H1 (cell line): ENCODE measurements at regions of chr1 and their contacts with region 1.

Region 1: GRCh38 chr1:145858894-145859490 is at the start of gene PIAS3:
- DNase-seq: peak; percentile 72 to 95
- H3K4me3 ChIP-seq: peak within 1 kb of the TSS; percentile 63 to 95 (median 89)
- H3K27ac ChIP-seq: peak within 1 kb of the TSS; percentile 78
- H3K4me1 ChIP-seq: peaks cover 0 to 5% (median 3%) of the 10 kb centered on the region in 4 experiments; a peak in 4 of 7 replicates
- H3K27me3 ChIP-seq: no peaks in the 10 kb centered on the region
- CTCF ChIP-seq: no peak
- EP300 ChIP-seq: peak in 1 of 2 experiments; percentile 61; a peak in 1 of 3 replicates
- POLR2A ChIP-seq: no peak; a peak in 1 of 3 replicates
- RAD21 ChIP-seq: no peak
- total RNA-seq, gene PIAS3: 36.7 and 40.7 TPM in 2 replicates

Region 2: GRCh38 chr1:145751491-145752037 is 107.4 kb before region 1 on chr1:
- CTCF ChIA-PET with region 1: no interaction called
- POLR2A ChIA-PET with region 1: no interaction called
- DNase-seq: no peak
- H3K4me3 ChIP-seq: no peak overlapping the region
- H3K27ac ChIP-seq: no peak overlapping the region
- H3K4me1 ChIP-seq: no peaks in the 10 kb centered on the region
- H3K27me3 ChIP-seq: no peaks in the 10 kb centered on the region
- CTCF ChIP-seq: no peak
- EP300 ChIP-seq: no peak
- POLR2A ChIP-seq: no peak
- RAD21 ChIP-seq: no peak

Region 3: DNA sequence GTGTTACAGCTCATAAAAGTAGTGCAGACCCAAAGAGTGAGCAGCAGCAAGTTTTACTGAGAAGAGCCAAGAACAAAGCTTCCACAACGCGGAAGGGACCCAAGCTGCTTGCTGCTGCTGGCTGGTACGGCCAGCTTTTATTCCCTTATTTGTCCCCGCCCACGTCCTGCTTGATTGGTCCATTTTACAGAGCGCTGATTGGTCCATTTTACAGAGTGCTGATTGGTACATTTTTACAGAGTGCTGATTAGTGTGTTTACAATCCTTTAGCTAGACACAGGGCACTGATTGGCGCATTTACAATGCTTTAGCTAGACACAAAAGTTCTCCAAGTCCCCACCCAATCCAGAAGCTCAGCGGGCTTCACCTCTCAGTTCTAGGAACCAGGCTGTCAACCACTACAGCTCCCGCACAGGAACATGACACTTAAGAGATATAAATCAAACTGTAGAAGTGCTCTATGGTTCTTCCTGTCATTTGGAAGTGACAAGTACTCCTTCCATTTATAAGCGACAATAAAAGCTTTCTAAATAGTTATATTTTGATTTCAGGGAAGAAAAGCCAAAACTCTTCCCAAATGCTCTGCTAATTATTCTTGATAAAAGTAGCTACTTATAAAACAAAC is 63.6 kb before region 1 on chr1:
- CTCF ChIA-PET with region 1: no interaction called
- POLR2A ChIA-PET with region 1: no interaction called
- DNase-seq: no peak
- H3K4me3 ChIP-seq: no peak overlapping the region
- H3K27ac ChIP-seq: no peak overlapping the region
- H3K4me1 ChIP-seq: peaks cover 0 to 3% (median 0%) of the 10 kb centered on the region in 4 experiments; a peak in 2 of 7 replicates
- H3K27me3 ChIP-seq: no peaks in the 10 kb centered on the region
- CTCF ChIP-seq: no peak
- EP300 ChIP-seq: no peak
- POLR2A ChIP-seq: no peak
- RAD21 ChIP-seq: no peak

Region 4: GRCh38 chr1:145871994-145872924 is 13.3 kb after region 1 on chr1:
- CTCF ChIA-PET with region 1: interaction called, 23 read pairs
- POLR2A ChIA-PET with region 1: interaction called, 34 read pairs
- DNase-seq: peak in 1 of 2 experiments; percentile 82
- H3K4me3 ChIP-seq: peak overlapping the region; percentile 36 to 62 (median 52)
- H3K27ac ChIP-seq: no peak overlapping the region
- H3K4me1 ChIP-seq: peaks cover 0 to 11% (median under 1%) of the 10 kb centered on the region in 4 experiments; a peak in 4 of 7 replicates
- H3K27me3 ChIP-seq: peaks cover 0 to 24% (median 12%) of the 10 kb centered on the region in 4 experiments; a peak in 6 of 7 replicates
- CTCF ChIP-seq: no peak
- EP300 ChIP-seq: no peak
- POLR2A ChIP-seq: 0 out of 3 replicates have a peak, but pooled peaks of 1 of the 2 experiments have one; percentile 19
- RAD21 ChIP-seq: no peak

Region 5: DNA sequence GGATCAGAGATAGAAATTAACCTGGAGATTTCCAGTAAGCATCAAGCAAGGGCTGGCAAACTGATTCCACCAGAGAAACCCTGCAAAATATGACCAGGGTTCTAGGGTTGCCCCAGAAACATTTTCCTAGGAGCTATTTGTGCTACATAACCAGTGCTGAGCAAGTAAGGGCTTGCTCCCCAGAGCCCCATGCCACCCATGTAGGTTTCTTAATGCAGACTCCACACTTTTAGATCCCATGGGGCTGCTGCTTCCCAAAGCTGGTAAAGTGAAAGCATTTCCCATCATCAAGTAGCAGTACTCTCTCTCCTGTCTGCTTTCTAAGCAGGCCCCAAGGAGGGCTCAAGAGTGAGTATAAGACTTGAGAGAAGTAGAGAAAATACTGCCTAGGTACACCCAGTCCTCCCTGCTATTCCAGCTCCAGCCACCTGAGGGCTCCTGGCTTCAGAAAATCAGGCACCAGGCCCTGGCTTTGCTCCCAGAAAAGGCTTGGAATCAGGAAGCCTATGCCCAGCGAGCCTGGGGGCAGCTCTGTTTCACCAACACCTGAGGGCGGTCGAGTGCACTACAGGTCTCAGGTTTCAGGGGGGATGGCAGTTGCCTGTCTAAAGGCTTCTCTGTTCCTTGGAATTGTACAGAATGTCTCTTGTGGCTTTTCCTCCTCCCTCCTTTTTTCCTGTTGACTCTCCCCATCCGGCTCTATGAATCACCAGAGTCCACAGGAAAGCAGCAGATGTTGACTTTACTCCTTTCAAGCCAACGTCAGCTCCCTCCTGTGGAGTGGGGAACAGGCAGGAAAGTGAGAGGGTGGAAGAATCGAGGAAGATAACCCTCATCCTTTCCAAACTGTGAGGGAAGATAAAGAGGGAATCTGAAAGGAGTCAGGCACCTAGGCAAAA is 32.8 kb after region 1 on chr1:
- CTCF ChIA-PET with region 1: interaction called, 43 read pairs
- POLR2A ChIA-PET with region 1: interaction called, 6 read pairs
- DNase-seq: peak; percentile 94 to 96
- H3K4me3 ChIP-seq: peak overlapping the region in 3 of 4 experiments; percentile 2 to 48 (median 3); a peak in 4 of 8 replicates
- H3K27ac ChIP-seq: no peak overlapping the region
- H3K4me1 ChIP-seq: peaks cover 0 to 6% (median 4%) of the 10 kb centered on the region in 4 experiments; a peak in 3 of 7 replicates
- H3K27me3 ChIP-seq: no peaks in the 10 kb centered on the region
- CTCF ChIP-seq: peak; percentile 84 to 99 (median 99)
- EP300 ChIP-seq: no peak
- POLR2A ChIP-seq: peak in 1 of 2 experiments; percentile 27; a peak in 1 of 3 replicates
- RAD21 ChIP-seq: peak; percentile 96 to 99

Region 6: GRCh38 chr1:145918144-145918992 is 59.4 kb after region 1 on chr1 and contains the start of gene PEX11B:
- CTCF ChIA-PET with region 1: no interaction called
- POLR2A ChIA-PET with region 1: interaction called, 10 read pairs
- DNase-seq: peak in 1 of 2 experiments; percentile 92
- H3K4me3 ChIP-seq: peak within 1 kb of the TSS; percentile 71 to 96 (median 82)
- H3K27ac ChIP-seq: no peak within 1 kb of the TSS
- H3K4me1 ChIP-seq: peaks cover 0 to 6% (median 2%) of the 10 kb centered on the region in 4 experiments; a peak in 6 of 7 replicates
- H3K27me3 ChIP-seq: no peaks in the 10 kb centered on the region
- CTCF ChIP-seq: no peak
- EP300 ChIP-seq: no peak
- POLR2A ChIP-seq: 0 out of 3 replicates have a peak, but pooled peaks of 1 of the 2 experiments have one; percentile 11
- RAD21 ChIP-seq: no peak
- total RNA-seq, gene PEX11B: 8.1 and 9.1 TPM in 2 replicates

Region 7: GRCh38 chr1:146049436-146049835 is 190.4 kb after region 1 on chr1:
- CTCF ChIA-PET with region 1: no interaction called
- POLR2A ChIA-PET with region 1: interaction called, 12 read pairs
- DNase-seq: no peak
- H3K4me3 ChIP-seq: no peak overlapping the region
- H3K27ac ChIP-seq: no peak overlapping the region
- H3K4me1 ChIP-seq: no peaks in the 10 kb centered on the region
- H3K27me3 ChIP-seq: no peaks in the 10 kb centered on the region
- CTCF ChIP-seq: no peak
- EP300 ChIP-seq: no peak
- POLR2A ChIP-seq: no peak
- RAD21 ChIP-seq: no peak